PC-9 (cell line): ENCODE measurements at regions of chr6 and their contacts with region 1.

Region 1: GRCh38 chr6:75863001-75863400 is 114.0 kb downstream of the MYO6 start:
- DNase-seq: no peak
- H3K4me3 ChIP-seq: no peak overlapping the region
- H3K27ac ChIP-seq: no peak overlapping the region
- H3K4me1 ChIP-seq: no peaks in the 10 kb centered on the region
- H3K27me3 ChIP-seq: no peaks in the 10 kb centered on the region
- CTCF ChIP-seq: no peak

Region 2: GRCh38 chr6:75882734-75883133 is 19.7 kb after region 1 on chr6:
- CTCF ChIA-PET with region 1: interaction called, 17 read pairs
- POLR2A ChIA-PET with region 1: no interaction called
- intact Hi-C with region 1: no loop called
- DNase-seq: peak in 1 of 2 experiments; percentile 43
- H3K4me3 ChIP-seq: no peak overlapping the region
- H3K27ac ChIP-seq: no peak overlapping the region
- H3K4me1 ChIP-seq: peaks cover 11% of the 10 kb centered on the region
- H3K27me3 ChIP-seq: no peaks in the 10 kb centered on the region
- CTCF ChIP-seq: no peak